AG04450 (cell line): ENCODE measurements at regions of chr19 and their contacts with region 1.

Region 1: DNA sequence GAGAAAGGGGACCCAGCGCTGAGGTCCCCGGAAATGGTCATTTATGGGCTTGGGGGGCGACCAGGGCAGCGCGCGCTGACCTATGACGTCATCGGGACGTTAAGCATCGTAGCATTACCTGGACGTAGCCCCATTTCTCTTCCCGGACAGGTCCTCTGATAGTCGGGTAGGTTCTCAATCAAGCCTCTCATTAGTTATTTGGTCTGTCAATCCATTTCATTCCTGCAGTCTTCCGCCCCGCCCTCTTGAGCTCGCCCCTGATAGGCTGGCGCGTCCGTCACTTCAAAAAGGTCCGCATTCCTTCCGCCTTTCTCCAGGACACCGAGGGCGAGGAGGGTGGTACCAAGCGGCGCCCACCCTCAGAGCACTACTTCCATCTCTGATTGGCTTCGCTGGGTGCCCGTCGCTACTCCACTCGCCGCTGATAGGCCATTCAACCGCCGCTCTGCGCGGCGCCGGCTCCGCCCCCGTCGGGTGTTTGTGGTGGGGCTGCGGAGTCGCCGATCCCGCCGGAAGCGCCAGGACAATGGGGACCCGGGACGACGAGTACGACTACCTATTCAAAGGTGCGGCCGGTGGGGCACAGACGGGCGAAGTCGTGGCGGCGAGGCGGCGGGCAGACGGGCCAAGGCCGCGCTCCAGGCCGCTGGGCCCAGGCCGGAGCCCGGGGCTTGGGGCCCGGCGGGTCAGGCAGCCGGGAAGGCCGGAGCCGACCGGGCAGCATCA is at the start of gene RAB11B:
- DNase-seq: peak; percentile 99
- H3K4me3 ChIP-seq: peak within 1 kb of the TSS; percentile 79
- H3K27ac ChIP-seq: peak within 1 kb of the TSS; percentile 73
- H3K27me3 ChIP-seq: no peaks in the 10 kb centered on the region
- CTCF ChIP-seq: no peak
- polyA plus RNA-seq, gene RAB11B: 25.3 and 37.6 TPM in 2 replicates

Region 2: GRCh38 chr19:8363803-8364771 is 26.0 kb before region 1 on chr19 and contains the start of gene ANGPTL4:
- CTCF ChIA-PET with region 1: interaction called, 3 read pairs
- POLR2A ChIA-PET with region 1: interaction called, 21 read pairs
- DNase-seq: no peak
- H3K4me3 ChIP-seq: peak within 1 kb of the TSS; percentile 56
- H3K27ac ChIP-seq: no peak within 1 kb of the TSS
- H3K27me3 ChIP-seq: peaks cover 3% of the 10 kb centered on the region
- CTCF ChIP-seq: peak; percentile 26; the same call in 1 of the 2 replicates
- polyA plus RNA-seq, gene ANGPTL4: 1.3 and 1.7 TPM in 2 replicates